H1 (cell line): ENCODE measurements at regions of chr2 and their contacts with region 1.

Region 1: DNA sequence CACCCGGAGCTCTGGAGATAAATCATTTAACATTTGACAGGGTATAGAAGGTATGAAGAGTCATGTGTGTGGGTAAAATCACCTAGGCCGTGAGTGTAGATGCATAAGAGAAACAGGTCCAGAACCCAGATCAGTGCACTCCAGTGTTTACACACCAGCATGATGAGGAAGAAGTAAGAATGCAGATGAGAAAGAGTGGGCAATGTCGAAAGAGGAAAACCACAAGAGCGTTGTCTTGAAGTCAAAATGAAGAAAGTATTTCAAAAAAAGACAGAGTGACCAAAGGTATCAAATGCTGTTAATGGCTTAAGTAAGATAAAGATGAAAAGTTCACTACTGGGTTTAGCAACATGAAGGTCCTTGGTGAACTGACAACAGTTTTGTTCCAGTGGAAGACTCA is 32.0 kb upstream of the PLB1 start:
- DNase-seq: no peak
- H3K4me3 ChIP-seq: no peak overlapping the region
- H3K27ac ChIP-seq: no peak overlapping the region
- H3K4me1 ChIP-seq: no peaks in the 10 kb centered on the region
- H3K27me3 ChIP-seq: no peaks in the 10 kb centered on the region
- CTCF ChIP-seq: no peak
- EP300 ChIP-seq: no peak
- POLR2A ChIP-seq: no peak
- RAD21 ChIP-seq: no peak

Region 2: DNA sequence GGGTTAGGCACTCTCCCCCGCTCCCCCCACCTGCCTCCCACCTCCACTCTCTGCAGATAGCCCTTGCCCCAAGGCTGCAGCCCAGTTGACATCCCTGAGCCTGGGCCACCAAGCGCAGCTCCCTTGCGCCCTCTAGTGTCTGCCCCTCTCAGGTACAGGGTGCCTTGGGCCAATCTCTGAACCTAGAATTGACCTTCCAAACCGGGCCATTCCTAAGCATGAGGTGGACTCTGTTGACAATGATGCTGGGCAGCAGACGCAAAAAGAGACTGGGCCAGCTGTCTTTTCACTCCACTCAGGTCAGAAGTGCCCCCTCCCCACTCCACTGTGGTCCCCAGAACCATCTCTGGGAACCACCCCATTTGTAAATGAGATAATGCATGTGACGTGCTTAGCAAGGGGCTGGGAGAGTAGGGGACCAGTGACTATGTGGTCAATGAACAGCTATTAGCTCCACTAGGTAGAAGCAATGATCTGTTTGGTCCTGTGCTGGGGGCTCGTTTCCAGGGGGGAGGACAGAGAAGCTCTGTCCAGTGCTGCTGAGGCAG is 11.3 kb before region 1 on chr2:
- CTCF ChIA-PET with region 1: interaction called, 12 read pairs
- POLR2A ChIA-PET with region 1: no interaction called
- DNase-seq: peak; percentile 38 to 93
- H3K4me3 ChIP-seq: no peak overlapping the region
- H3K27ac ChIP-seq: no peak overlapping the region
- H3K4me1 ChIP-seq: no peaks in the 10 kb centered on the region; a peak in 1 of 7 replicates
- H3K27me3 ChIP-seq: no peaks in the 10 kb centered on the region
- CTCF ChIP-seq: peak; percentile 93 to 97 (median 97)
- EP300 ChIP-seq: 0 out of 3 replicates have a peak, but pooled peaks of 1 of the 2 experiments have one; percentile 47
- POLR2A ChIP-seq: no peak
- RAD21 ChIP-seq: peak; percentile 96 to 97

Region 3: DNA sequence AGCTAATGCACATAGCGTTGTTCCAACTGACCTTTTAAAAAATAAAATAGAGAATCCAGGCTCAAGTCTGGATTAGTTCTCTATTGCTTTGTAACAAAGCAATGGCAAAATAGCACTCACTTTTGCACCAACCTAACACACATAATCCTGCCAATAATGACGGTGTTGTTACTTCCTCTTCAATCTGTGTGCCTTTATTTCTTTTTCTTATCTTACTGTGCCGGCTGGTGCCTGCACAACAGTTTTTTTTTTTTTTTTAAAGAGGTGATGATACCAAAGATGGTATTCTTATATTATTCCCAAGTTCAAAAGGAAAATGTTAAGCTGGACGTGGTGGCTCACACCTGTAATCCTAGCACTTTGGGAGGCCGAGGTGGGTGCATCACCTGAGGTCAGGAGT is 35.4 kb after region 1 on chr2:
- CTCF ChIA-PET with region 1: no interaction called
- POLR2A ChIA-PET with region 1: no interaction called
- DNase-seq: no peak
- H3K4me3 ChIP-seq: no peak overlapping the region
- H3K27ac ChIP-seq: no peak overlapping the region
- H3K4me1 ChIP-seq: no peaks in the 10 kb centered on the region
- H3K27me3 ChIP-seq: no peaks in the 10 kb centered on the region
- CTCF ChIP-seq: no peak
- EP300 ChIP-seq: no peak
- POLR2A ChIP-seq: no peak
- RAD21 ChIP-seq: no peak